Activated CD4-positive, alpha-beta T cell treated with anti-CD3 and anti-CD28 coated beads for 36 hours (primary cell): ENCODE measurements at regions of chr17 and their contacts with region 1.

Region 1: GRCh38 chr17:55348749-55349354 is 72.8 kb downstream of the MMD start:
- DNase-seq: peak; percentile 64
- ATAC-seq: no peak
- H3K4me3 Mint-ChIP-seq: no peak overlapping the region
- H3K27ac Mint-ChIP-seq: no peak overlapping the region
- H3K4me1 Mint-ChIP-seq: peaks cover 11% of the 10 kb centered on the region
- H3K27me3 Mint-ChIP-seq: peaks cover 3% of the 10 kb centered on the region

Region 2: GRCh38 chr17:55053855-55054254 is 295.0 kb before region 1 on chr17:
- CTCF ChIA-PET with region 1: no interaction called
- POLR2A ChIA-PET with region 1: no interaction called
- intact Hi-C with region 1: loop called in 1 of 2 experiments (anchors 5 kb)
- DNase-seq: no peak
- ATAC-seq: no peak
- H3K4me3 Mint-ChIP-seq: no peak overlapping the region
- H3K27ac Mint-ChIP-seq: no peak overlapping the region
- H3K4me1 Mint-ChIP-seq: no peaks in the 10 kb centered on the region
- H3K27me3 Mint-ChIP-seq: no peaks in the 10 kb centered on the region

Region 3: GRCh38 chr17:55273579-55274354 is 75.1 kb before region 1 on chr17:
- CTCF ChIA-PET with region 1: no interaction called
- POLR2A ChIA-PET with region 1: no interaction called
- intact Hi-C with region 1: no loop called
- DNase-seq: no peak
- ATAC-seq: no peak
- H3K4me3 Mint-ChIP-seq: no peak overlapping the region
- H3K27ac Mint-ChIP-seq: no peak overlapping the region
- H3K4me1 Mint-ChIP-seq: no peaks in the 10 kb centered on the region
- H3K27me3 Mint-ChIP-seq: peaks cover 14% of the 10 kb centered on the region

Region 4: GRCh38 chr17:55303701-55304145 is 45.1 kb before region 1 on chr17:
- CTCF ChIA-PET with region 1: interaction called, 5 read pairs
- POLR2A ChIA-PET with region 1: no interaction called
- intact Hi-C with region 1: loop called (anchors 2 to 5 kb)
- DNase-seq: no peak
- ATAC-seq: peak; percentile 60
- H3K4me3 Mint-ChIP-seq: no peak overlapping the region
- H3K27ac Mint-ChIP-seq: no peak overlapping the region
- H3K4me1 Mint-ChIP-seq: peaks cover 3% of the 10 kb centered on the region
- H3K27me3 Mint-ChIP-seq: peaks cover 4% of the 10 kb centered on the region

Region 5: DNA sequence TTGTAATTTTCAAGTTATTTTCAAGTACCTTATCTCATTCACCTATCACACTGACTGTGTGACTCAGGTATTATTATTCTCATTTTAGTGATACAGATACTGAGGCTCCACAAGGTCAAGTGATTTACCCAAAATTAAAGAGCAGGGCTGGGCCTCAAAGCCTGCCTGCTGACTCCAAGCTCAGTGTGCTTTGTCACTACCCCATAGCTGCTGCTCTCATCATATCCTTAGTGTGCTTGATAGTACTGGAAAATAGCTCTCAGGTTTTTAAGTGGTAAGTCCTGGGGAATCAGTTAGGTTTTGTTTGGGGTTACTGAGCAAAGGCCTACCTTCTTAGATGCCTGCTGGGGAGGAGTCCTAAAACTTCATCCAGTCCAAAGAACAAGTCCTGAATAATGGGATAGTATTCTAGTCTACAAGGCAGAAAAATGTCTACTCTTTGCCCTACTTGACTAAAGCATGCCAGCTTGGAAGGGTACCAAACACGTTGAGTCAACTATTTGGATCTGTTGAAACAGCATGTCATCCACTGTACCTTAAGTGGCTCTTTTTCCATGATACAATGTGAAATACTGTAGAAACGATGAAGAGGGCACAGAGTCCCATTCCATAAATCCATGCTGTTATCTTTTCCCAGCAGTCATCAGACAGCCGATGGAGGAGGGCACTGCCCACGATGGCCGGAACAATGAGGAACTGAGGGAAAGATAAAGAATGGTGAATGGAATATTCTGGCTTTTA is 62.0 kb after region 1 on chr17:
- CTCF ChIA-PET with region 1: no interaction called
- POLR2A ChIA-PET with region 1: no interaction called
- intact Hi-C with region 1: no loop called
- DNase-seq: no peak
- ATAC-seq: no peak
- H3K4me3 Mint-ChIP-seq: no peak overlapping the region
- H3K27ac Mint-ChIP-seq: no peak overlapping the region
- H3K4me1 Mint-ChIP-seq: no peaks in the 10 kb centered on the region
- H3K27me3 Mint-ChIP-seq: no peaks in the 10 kb centered on the region